ENCODE measurements at regions of chr3 and their contacts with region 1.

Region 1: GRCh38 chr3:27484015-27484844 is at the start of gene SLC4A7:
- DNase-seq: peak; percentile 99
- ATAC-seq: peak; percentile 95
- H3K4me3 Mint-ChIP-seq: peak within 1 kb of the TSS; percentile 99
- H3K27ac Mint-ChIP-seq: peak within 1 kb of the TSS; percentile 96
- H3K4me1 Mint-ChIP-seq: peaks cover 30% of the 10 kb centered on the region
- H3K27me3 Mint-ChIP-seq: no peaks in the 10 kb centered on the region
- total RNA-seq, gene SLC4A7: 46.4 to 53.0 TPM

Region 2: GRCh38 chr3:25782938-25783660 is 1701.1 kb before region 1 on chr3 and contains the start of gene NGLY1:
- CTCF ChIA-PET with region 1: no interaction called
- POLR2A ChIA-PET with region 1: no interaction called
- intact Hi-C with region 1: loop called (anchors 1 to 10 kb)
- DNase-seq: peak; percentile 92
- ATAC-seq: peak; percentile 93
- H3K4me3 Mint-ChIP-seq: peak within 1 kb of the TSS; percentile 92
- H3K27ac Mint-ChIP-seq: peak within 1 kb of the TSS; percentile 90
- H3K4me1 Mint-ChIP-seq: peaks cover 54% of the 10 kb centered on the region
- H3K27me3 Mint-ChIP-seq: no peaks in the 10 kb centered on the region
- total RNA-seq, gene NGLY1: 86.1 to 135 TPM

Region 3: DNA sequence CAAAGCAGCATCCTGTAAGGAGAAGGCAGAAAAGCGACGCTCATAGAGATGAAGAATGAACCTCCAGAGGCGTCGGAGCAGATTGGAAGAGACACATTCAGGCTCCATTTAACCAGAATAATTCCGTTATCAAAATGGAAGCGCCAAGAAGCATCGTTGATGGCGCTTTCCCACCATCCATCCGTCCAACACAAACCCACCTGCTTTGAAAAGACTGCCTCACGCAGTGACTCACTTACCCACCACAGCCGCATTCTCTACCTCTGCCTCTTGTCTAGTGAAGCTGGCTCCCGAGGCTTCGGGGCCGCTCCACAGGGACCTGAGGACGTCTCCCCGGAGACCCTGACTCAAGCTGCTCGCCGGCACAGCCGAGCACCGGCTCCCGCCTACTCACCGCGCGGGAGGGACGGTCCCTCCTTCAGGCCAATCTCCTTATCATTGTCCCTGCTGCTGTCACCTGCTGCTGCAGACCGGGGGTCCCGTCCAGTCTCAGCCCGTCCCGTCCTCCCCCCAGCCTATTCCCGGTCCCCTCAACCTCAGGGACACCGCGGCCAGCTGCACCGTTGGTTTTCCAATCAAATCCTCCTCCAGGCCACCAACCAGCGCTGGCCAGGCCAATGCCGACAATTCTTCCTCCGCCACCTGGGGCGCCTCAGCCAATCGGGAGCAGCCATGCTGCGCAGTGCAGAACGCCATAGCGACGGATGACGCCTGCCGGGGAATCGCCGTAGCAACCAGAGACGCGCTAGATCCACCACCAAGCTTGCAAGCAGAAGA is 115.2 kb before region 1 on chr3 and contains the start of gene NEK10:
- CTCF ChIA-PET with region 1: no interaction called
- POLR2A ChIA-PET with region 1: no interaction called
- intact Hi-C with region 1: loop called (anchors 1 kb)
- DNase-seq: peak; percentile 95
- ATAC-seq: peak; percentile 99
- H3K4me3 Mint-ChIP-seq: peak within 1 kb of the TSS; percentile 92
- H3K27ac Mint-ChIP-seq: peak within 1 kb of the TSS; percentile 72
- H3K4me1 Mint-ChIP-seq: peaks cover 14% of the 10 kb centered on the region
- H3K27me3 Mint-ChIP-seq: no peaks in the 10 kb centered on the region
- total RNA-seq, gene NEK10: 0.19 to 0.57 TPM

Region 4: DNA sequence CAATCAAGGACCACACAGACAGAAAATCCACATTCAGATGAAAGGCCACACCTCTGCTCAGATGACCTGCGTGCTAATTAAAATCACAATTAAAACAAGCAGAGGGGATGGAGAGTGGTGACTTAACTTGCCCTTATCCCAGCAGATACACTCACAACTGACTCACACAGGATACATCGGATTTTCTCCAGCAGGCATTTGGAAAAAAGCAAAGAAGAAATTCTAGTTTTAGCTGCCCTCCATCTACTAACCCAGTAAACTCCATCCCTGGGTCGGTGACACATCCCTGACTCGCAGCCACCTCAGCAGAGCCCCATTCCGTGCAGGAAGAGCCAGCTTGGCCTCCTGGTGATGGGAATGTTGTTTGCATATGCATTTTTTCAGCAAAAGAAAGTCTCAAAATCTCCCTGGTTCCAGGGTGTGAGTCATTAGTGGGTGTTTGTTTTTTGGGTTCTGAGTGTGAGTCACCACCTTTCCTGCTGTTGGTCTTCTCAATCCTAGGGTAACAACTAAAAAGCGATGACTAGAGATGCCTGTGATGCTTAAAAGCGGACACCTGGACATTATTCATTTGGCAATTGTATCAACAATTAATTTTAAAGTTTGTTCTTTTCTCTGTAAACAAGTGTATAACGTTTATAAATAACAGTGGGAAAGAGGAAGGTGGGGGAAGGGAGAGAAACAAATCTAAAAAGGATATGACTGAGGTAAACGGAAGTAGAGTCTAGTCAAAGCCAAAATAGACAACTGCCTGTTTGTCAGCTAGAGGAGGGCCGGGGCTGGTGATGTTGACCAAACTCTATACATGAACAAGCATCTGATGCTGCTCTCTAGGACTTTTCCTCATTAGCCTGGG is 49.7 kb after region 1 on chr3:
- CTCF ChIA-PET with region 1: no interaction called
- POLR2A ChIA-PET with region 1: interaction called, 6 read pairs
- intact Hi-C with region 1: loop called in 1 of 2 experiments (anchors 1 kb)
- DNase-seq: peak; percentile 61
- ATAC-seq: peak; percentile 92
- H3K4me3 Mint-ChIP-seq: peak overlapping the region; percentile 20
- H3K27ac Mint-ChIP-seq: peak overlapping the region; percentile 81
- H3K4me1 Mint-ChIP-seq: peaks cover 11% of the 10 kb centered on the region
- H3K27me3 Mint-ChIP-seq: no peaks in the 10 kb centered on the region

Region 5: GRCh38 chr3:27632431-27633223 is 148.4 kb after region 1 on chr3:
- CTCF ChIA-PET with region 1: interaction called, 4 read pairs
- POLR2A ChIA-PET with region 1: interaction called, 3 read pairs
- intact Hi-C with region 1: loop called in 1 of 2 experiments (anchors 2 kb)
- DNase-seq: peak; percentile 60
- ATAC-seq: peak; percentile 71
- H3K4me3 Mint-ChIP-seq: peak overlapping the region; percentile 75
- H3K27ac Mint-ChIP-seq: peak overlapping the region; percentile 77
- H3K4me1 Mint-ChIP-seq: peaks cover 28% of the 10 kb centered on the region
- H3K27me3 Mint-ChIP-seq: no peaks in the 10 kb centered on the region

Region 6: GRCh38 chr3:28241221-28242160 is 757.3 kb after region 1 on chr3 and contains the start of gene CMC1:
- CTCF ChIA-PET with region 1: no interaction called
- POLR2A ChIA-PET with region 1: no interaction called
- intact Hi-C with region 1: loop called in 1 of 2 experiments (anchors 2 kb)
- DNase-seq: peak; percentile 96
- ATAC-seq: peak; percentile 97
- H3K4me3 Mint-ChIP-seq: peak within 1 kb of the TSS; percentile 83
- H3K27ac Mint-ChIP-seq: peak within 1 kb of the TSS; percentile 91
- H3K4me1 Mint-ChIP-seq: peaks cover 45% of the 10 kb centered on the region
- H3K27me3 Mint-ChIP-seq: no peaks in the 10 kb centered on the region
- total RNA-seq, gene CMC1: 21.6 to 28.3 TPM

Region 7: GRCh38 chr3:28348629-28349483 is 864.6 kb after region 1 on chr3 and contains the starts of genes AZI2 and ZCWPW2:
- CTCF ChIA-PET with region 1: interaction called, 3 read pairs
- POLR2A ChIA-PET with region 1: interaction called, 3 read pairs
- intact Hi-C with region 1: loop called (anchors 1 to 2 kb)
- DNase-seq: peak; percentile 96
- ATAC-seq: peak; percentile 87
- H3K4me3 Mint-ChIP-seq: peak within 1 kb of the TSS; percentile 98
- H3K27ac Mint-ChIP-seq: peak within 1 kb of the TSS; percentile 98
- H3K4me1 Mint-ChIP-seq: peaks cover 43% of the 10 kb centered on the region
- H3K27me3 Mint-ChIP-seq: no peaks in the 10 kb centered on the region
- total RNA-seq, gene AZI2: 52.3 to 78.8 TPM
- total RNA-seq, gene ZCWPW2: 0.37 to 0.39 TPM